ENCODE measurements at regions of chr22 and their contacts with region 1.

Region 1: GRCh38 chr22:35930933-35931332 is 97.7 kb downstream of the RBFOX2 start:
- H3K4me3 ChIP-seq: no peak overlapping the region
- H3K27ac ChIP-seq: no peak overlapping the region
- H3K4me1 ChIP-seq: no peaks in the 10 kb centered on the region; the same call in 1 of the 2 replicates
- CTCF ChIP-seq: peak; percentile 43

Region 2: DNA sequence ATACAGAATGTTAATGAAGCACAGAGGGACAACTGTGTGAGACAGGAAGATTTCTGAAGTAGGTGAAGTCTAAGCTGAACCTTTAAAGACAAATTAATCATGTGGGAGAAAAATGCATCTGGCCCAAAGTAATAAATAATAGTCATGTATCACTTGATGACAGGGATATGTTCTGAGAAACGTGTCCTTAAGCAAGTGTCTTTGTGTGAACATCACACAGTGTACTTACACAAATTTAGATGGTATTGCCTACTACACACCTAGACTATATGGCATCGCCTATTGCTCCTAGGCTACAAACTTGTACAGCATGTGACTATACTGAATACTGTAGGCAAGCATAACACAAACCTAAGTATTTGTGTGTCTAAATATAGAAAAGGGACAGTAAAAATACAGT is 100.6 kb before region 1 on chr22:
- CTCF ChIA-PET with region 1: no interaction called
- POLR2A ChIA-PET with region 1: no interaction called
- H3K4me3 ChIP-seq: no peak overlapping the region
- H3K27ac ChIP-seq: no peak overlapping the region
- H3K4me1 ChIP-seq: peaks cover 12% of the 10 kb centered on the region
- CTCF ChIP-seq: no peak

Region 3: DNA sequence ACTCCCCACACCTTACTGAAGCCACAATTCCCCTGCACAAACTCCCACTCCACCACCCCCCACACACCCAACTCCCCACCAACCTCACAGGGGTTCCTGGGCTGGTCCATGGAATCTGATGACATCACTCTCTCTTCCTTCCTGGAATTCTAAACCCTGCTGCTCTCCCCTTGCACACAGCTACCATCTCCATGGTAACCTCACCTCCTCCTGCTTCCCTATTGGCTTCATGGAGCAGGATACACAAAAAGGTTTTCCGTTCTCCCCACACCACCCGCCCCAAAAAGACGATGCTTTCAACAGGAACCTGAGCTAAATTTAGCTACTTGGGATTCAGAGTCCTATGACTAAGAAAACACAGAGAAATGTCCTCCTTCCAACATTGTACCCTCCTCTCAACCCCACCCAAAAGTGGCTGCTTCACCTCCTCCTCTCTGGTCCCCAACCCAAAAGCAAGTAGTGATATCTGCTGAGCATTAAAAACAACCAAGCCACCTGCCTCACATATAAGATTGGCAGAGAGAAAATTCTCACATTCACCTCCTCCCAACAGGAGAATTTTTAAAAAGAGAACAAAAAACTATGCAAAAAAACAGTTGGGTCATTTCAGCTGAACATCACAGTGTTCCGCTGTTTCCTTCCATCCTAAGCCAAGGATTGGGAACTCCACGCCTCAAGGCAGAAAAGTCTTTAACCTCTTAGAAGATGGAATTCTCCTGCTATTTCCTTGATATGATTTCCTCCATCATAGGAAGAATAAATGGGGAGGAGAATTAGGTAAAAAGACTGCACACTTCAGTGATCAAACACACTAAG is 30.8 kb after region 1 on chr22:
- CTCF ChIA-PET with region 1: no interaction called
- POLR2A ChIA-PET with region 1: no interaction called
- H3K4me3 ChIP-seq: no peak overlapping the region
- H3K27ac ChIP-seq: no peak overlapping the region
- H3K4me1 ChIP-seq: peaks cover 13% of the 10 kb centered on the region; the same call in 1 of the 2 replicates
- CTCF ChIP-seq: no peak

Region 4: DNA sequence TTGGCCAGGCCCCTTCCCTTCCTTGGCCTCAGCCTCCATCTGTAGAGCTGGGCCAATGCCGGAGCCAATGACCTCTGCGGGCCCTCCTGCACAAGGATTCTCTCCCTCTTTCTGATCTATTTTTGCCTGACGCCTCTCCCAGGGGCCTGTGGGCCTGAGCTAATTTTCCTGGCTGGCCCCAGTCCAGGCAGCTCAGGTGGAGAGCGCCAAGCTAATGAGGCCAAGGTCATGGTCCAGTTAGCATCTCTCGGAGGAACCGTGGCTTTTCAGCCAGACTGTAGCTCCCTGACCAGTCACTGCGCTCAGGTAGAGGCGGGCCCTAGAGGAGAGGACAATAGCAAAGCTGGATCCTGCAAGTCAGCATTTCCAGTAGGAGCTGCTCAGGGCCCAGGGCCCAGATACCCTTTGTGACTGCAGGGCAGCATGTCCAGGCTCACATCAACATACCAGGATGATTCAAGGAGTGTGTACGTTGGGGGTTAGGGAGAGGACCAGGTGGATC is 186.2 kb after region 1 on chr22:
- CTCF ChIA-PET with region 1: interaction called, 13 read pairs
- POLR2A ChIA-PET with region 1: no interaction called
- H3K4me3 ChIP-seq: no peak overlapping the region
- H3K27ac ChIP-seq: no peak overlapping the region
- H3K4me1 ChIP-seq: no peaks in the 10 kb centered on the region
- CTCF ChIP-seq: no peak

Measured in HEK293 (cell line).